Heart right ventricle (tissue), 16 donors: ENCODE measurements at regions of chr7 and their contacts with region 1.

Region 1: DNA sequence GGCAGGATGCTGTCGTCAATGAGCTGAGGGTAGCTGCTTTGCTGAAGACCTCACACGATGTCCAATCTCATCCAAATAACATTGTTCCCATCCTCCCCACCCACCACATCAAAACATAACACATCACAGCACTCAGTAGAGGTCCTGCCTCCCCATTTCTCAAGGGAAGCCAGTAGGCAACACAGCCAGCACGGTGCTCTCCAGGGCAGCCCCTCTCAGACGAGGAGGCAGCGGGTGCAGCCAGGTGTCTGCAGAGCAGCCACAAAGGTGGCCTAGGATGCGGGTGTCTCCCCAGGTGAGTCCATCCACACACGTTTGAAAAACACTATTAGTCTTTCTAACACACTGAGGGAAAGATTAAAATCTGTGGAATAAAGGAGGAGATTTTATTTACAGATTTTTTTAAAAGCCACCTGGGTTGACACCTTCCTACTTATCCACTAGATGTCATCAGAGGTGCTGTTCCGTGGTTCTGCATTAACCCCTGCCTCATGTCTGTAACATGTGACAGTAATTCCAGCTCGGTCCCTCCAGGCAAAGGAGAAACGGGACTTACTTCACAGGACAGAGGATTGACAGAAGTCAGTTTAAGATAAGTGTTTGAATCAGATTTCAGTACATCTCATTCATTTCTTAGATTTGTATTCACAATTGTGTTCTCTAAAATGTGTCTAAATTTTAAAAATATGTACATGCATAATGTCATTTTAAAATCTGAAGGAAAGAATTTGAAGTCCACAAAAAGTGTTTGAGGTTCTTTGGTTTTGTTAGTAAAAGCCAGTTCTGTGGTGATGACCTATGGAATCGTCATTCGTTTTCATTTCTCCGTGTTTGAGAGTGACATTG is 68.0 kb downstream of the LANCL2 start:
- DNase-seq: no peak
- ATAC-seq: peak in 6 of 8 donors; percentile 36 to 71 (median 58)
- H3K4me3 ChIP-seq: no peak overlapping the region
- H3K27ac ChIP-seq: no peak overlapping the region
- H3K4me1 ChIP-seq: peaks cover 0 to 8% (median 0%) of the 10 kb centered on the region in 9 donors
- H3K27me3 ChIP-seq: no peaks in the 10 kb centered on the region
- CTCF ChIP-seq: peak in 8 of 9 donors; percentile 24 to 61 (median 50)

Region 2: DNA sequence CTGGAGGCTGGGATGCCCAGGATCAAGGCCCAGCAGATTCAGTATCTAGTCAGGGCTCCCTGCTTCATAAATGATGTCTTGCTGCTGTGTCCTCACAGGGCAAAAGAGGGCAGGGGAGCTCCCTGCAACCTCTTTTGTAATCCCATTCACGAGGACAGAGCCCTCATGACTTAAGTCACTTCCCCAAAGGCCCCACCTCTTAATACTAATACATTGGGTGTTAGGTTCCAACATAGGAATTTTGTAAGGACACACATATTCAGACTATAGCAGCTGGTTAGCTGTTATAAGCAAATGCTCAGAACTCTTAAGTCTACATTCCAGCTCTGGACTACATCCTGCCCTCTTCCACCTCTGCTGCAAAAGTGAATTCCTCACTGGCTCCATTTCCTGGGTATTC is 76.2 kb after region 1 on chr7:
- intact Hi-C with region 1: loop called in 2 of 10 experiments (anchors 10 kb)
- DNase-seq: no peak
- ATAC-seq: peak in 3 of 8 donors; percentile 42 to 55 (median 48)
- H3K4me3 ChIP-seq: no peak overlapping the region
- H3K27ac ChIP-seq: peak overlapping the region in 1 of 10 donors; percentile 71
- H3K4me1 ChIP-seq: peaks cover 0 to 39% (median 4%) of the 10 kb centered on the region in 9 donors
- H3K27me3 ChIP-seq: no peaks in the 10 kb centered on the region
- CTCF ChIP-seq: no peak

Region 3: DNA sequence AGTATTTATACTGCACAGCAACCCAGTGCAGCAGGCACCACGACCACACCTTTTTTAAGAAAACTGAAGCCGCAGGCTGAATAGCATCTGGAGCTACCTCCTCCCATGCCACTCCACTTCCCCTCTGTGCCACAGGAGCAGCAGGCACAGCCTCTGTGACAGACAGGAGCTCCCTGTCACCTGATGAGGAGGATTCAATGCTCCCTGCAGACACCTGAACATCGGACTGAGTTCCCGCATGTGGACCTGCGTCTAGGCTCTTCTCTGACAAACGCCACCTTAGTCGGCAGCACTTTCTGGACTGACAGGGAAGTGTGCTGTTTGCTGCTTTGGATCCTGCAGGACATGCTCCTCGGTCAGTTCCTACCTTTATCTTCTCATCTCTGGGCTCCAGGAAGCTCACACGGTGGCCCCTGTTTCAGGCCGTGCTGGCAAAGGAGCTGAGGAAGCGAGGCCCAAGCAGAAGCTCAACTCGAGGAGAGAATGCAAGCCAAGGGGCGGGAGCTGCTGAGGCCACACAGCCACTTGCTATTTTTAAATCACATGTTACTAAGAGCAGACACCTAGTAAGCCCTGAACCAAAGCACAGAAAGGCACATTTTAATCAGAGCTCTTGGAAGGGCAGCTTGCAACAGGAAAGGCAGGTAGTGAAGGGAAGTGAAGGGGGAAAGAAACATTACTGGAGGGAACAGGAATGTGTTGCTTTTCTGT is 82.6 kb after region 1 on chr7:
- intact Hi-C with region 1: loop called in 1 of 10 experiments (anchors 10 kb)
- DNase-seq: peak; percentile 40 to 57
- ATAC-seq: peak; percentile 55 to 93 (median 86)
- H3K4me3 ChIP-seq: peak overlapping the region in 1 of 10 donors; percentile 12
- H3K27ac ChIP-seq: peak overlapping the region in 8 of 10 donors; percentile 3 to 56 (median 32)
- H3K4me1 ChIP-seq: peaks cover 5 to 25% (median 14%) of the 10 kb centered on the region in 9 donors
- H3K27me3 ChIP-seq: no peaks in the 10 kb centered on the region
- CTCF ChIP-seq: no peak